Activated naive CD4-positive, alpha-beta T cell treated with anti-CD3 and anti-CD28 coated beads for 36 hours (primary cell): ENCODE measurements at regions of chr5 and their contacts with region 1.

Region 1: GRCh38 chr5:98839469-98840383 is 66.3 kb downstream of the RGMB start:
- DNase-seq: peak; percentile 26
- H3K4me3 Mint-ChIP-seq: peak overlapping the region; percentile 46
- H3K27ac Mint-ChIP-seq: no peak overlapping the region
- H3K4me1 Mint-ChIP-seq: no peaks in the 10 kb centered on the region
- H3K27me3 Mint-ChIP-seq: peaks cover 2% of the 10 kb centered on the region

Region 2: DNA sequence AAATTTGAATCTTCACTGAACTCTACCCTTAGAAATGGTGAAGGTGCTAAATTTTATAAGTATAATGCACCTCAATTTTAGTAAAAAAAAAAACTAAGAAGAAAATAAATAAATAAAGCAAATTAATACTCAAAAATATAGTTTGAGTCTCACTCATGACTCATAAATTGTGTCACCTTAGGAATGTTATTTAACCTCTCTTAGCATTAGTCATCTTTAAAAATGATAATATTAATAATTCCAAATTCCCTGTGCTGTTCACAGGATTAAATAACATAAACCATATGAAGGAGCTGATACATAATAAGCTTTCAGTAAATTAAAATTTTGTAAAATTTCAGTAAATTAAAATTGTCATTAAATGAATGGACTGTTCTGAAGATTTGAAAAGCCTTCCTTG is 406.1 kb before region 1 on chr5:
- CTCF ChIA-PET with region 1: no interaction called
- intact Hi-C with region 1: no loop called
- DNase-seq: no peak
- H3K4me3 Mint-ChIP-seq: no peak overlapping the region
- H3K27ac Mint-ChIP-seq: no peak overlapping the region
- H3K4me1 Mint-ChIP-seq: no peaks in the 10 kb centered on the region
- H3K27me3 Mint-ChIP-seq: peaks cover 4% of the 10 kb centered on the region

Region 3: GRCh38 chr5:98727686-98728085 is 112.0 kb before region 1 on chr5:
- CTCF ChIA-PET with region 1: no interaction called
- intact Hi-C with region 1: no loop called
- DNase-seq: no peak
- H3K4me3 Mint-ChIP-seq: no peak overlapping the region
- H3K27ac Mint-ChIP-seq: no peak overlapping the region
- H3K4me1 Mint-ChIP-seq: no peaks in the 10 kb centered on the region
- H3K27me3 Mint-ChIP-seq: peaks cover 12% of the 10 kb centered on the region

Region 4: GRCh38 chr5:99060306-99061261 is 220.9 kb after region 1 on chr5:
- CTCF ChIA-PET with region 1: interaction called, 3 read pairs
- intact Hi-C with region 1: loop called (anchors 1 kb)
- DNase-seq: peak; percentile 92
- H3K4me3 Mint-ChIP-seq: no peak overlapping the region
- H3K27ac Mint-ChIP-seq: no peak overlapping the region
- H3K4me1 Mint-ChIP-seq: peaks cover 1% of the 10 kb centered on the region
- H3K27me3 Mint-ChIP-seq: no peaks in the 10 kb centered on the region